ENCODE measurements at regions of chr18 and their contacts with region 1.

Region 1: DNA sequence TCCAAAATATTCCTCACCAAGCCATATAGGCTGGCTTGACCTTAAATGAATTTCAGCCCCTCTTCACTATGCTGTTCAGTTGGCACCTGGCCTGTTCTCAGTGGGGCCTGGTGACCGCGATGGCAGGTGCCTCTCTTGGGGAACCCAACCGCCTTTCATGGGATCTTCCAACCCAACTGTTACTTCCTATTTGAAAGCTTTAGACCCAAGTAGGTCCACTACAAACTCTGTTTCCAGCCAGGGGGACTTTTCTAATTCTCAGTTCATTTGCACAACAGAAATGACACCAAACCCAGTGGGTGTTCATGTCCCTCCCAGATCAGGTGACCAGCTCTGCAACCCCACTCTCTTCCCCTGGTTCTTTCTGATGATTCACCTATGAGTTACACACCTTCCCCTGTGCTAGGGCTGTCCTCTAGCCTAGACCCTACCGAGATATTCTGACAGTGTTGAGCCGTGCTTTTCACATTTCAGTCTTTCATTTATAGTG is 35.6 kb upstream of the NDUFV2 start:
- DNase-seq: peak; percentile 45
- ATAC-seq: peak; percentile 29
- H3K4me3 ChIP-seq: no peak overlapping the region
- H3K4me3 Mint-ChIP-seq: peak overlapping the region; percentile 56
- H3K27ac ChIP-seq: no peak overlapping the region
- H3K27ac Mint-ChIP-seq: peak overlapping the region; percentile 66
- H3K4me1 ChIP-seq: peaks cover 44 to 60% of the 10 kb centered on the region in 2 donors
- H3K4me1 Mint-ChIP-seq: peaks cover 55% of the 10 kb centered on the region
- H3K27me3 ChIP-seq: no peaks in the 10 kb centered on the region
- H3K27me3 Mint-ChIP-seq: no peaks in the 10 kb centered on the region
- CTCF ChIP-seq: no peak

Region 2: GRCh38 chr18:8922669-8923068 is 144.2 kb before region 1 on chr18:
- CTCF ChIA-PET with region 1: no interaction called
- POLR2A ChIA-PET with region 1: no interaction called
- intact Hi-C with region 1: no loop called
- DNase-seq: no peak
- ATAC-seq: no peak
- H3K4me3 ChIP-seq: no peak overlapping the region
- H3K4me3 Mint-ChIP-seq: no peak overlapping the region
- H3K27ac ChIP-seq: no peak overlapping the region
- H3K27ac Mint-ChIP-seq: no peak overlapping the region
- H3K4me1 ChIP-seq: peaks cover 0 to 5% of the 10 kb centered on the region in 2 donors
- H3K4me1 Mint-ChIP-seq: peaks cover 9% of the 10 kb centered on the region
- H3K27me3 ChIP-seq: no peaks in the 10 kb centered on the region
- H3K27me3 Mint-ChIP-seq: no peaks in the 10 kb centered on the region
- CTCF ChIP-seq: no peak

Region 3: GRCh38 chr18:9082711-9083510 is 16.0 kb after region 1 on chr18:
- CTCF ChIA-PET with region 1: interaction called, 36 read pairs
- POLR2A ChIA-PET with region 1: interaction called, 3 read pairs
- intact Hi-C with region 1: loop called (anchors 2 kb)
- DNase-seq: peak; percentile 40
- ATAC-seq: peak; percentile 70
- H3K4me3 ChIP-seq: no peak overlapping the region
- H3K4me3 Mint-ChIP-seq: peak overlapping the region; percentile 59
- H3K27ac ChIP-seq: peak overlapping the region; percentile 7 to 39
- H3K27ac Mint-ChIP-seq: peak overlapping the region; percentile 79
- H3K4me1 ChIP-seq: peaks cover 15 to 17% of the 10 kb centered on the region in 2 donors
- H3K4me1 Mint-ChIP-seq: peaks cover 19% of the 10 kb centered on the region
- H3K27me3 ChIP-seq: no peaks in the 10 kb centered on the region
- H3K27me3 Mint-ChIP-seq: no peaks in the 10 kb centered on the region
- CTCF ChIP-seq: no peak

Region 4: GRCh38 chr18:9117980-9118841 is 51.3 kb after region 1 on chr18:
- CTCF ChIA-PET with region 1: interaction called, 20 read pairs
- POLR2A ChIA-PET with region 1: no interaction called
- intact Hi-C with region 1: no loop called
- DNase-seq: peak; percentile 59
- ATAC-seq: peak; percentile 26
- H3K4me3 ChIP-seq: peak overlapping the region in 2 of 5 experiments; percentile 3 to 66
- H3K4me3 Mint-ChIP-seq: peak overlapping the region; percentile 88
- H3K27ac ChIP-seq: peak overlapping the region; percentile 82 to 99
- H3K27ac Mint-ChIP-seq: peak overlapping the region; percentile 98
- H3K4me1 ChIP-seq: peaks cover 56 to 86% of the 10 kb centered on the region in 2 donors
- H3K4me1 Mint-ChIP-seq: peaks cover 70% of the 10 kb centered on the region
- H3K27me3 ChIP-seq: no peaks in the 10 kb centered on the region
- H3K27me3 Mint-ChIP-seq: no peaks in the 10 kb centered on the region
- CTCF ChIP-seq: no peak

Region 5: GRCh38 chr18:9147440-9148202 is 80.8 kb after region 1 on chr18:
- CTCF ChIA-PET with region 1: interaction called, 84 read pairs
- POLR2A ChIA-PET with region 1: no interaction called
- intact Hi-C with region 1: no loop called
- DNase-seq: peak; percentile 72
- ATAC-seq: peak; percentile 60
- H3K4me3 ChIP-seq: no peak overlapping the region
- H3K4me3 Mint-ChIP-seq: peak overlapping the region; percentile 58
- H3K27ac ChIP-seq: peak overlapping the region; percentile 35 to 48
- H3K27ac Mint-ChIP-seq: peak overlapping the region; percentile 74
- H3K4me1 ChIP-seq: peaks cover 63 to 68% of the 10 kb centered on the region in 2 donors
- H3K4me1 Mint-ChIP-seq: peaks cover 72% of the 10 kb centered on the region
- H3K27me3 ChIP-seq: no peaks in the 10 kb centered on the region
- H3K27me3 Mint-ChIP-seq: no peaks in the 10 kb centered on the region
- CTCF ChIP-seq: peak; percentile 76

Region 6: GRCh38 chr18:9184998-9185613 is 118.2 kb after region 1 on chr18:
- CTCF ChIA-PET with region 1: interaction called, 11 read pairs
- POLR2A ChIA-PET with region 1: no interaction called
- intact Hi-C with region 1: no loop called
- DNase-seq: peak; percentile 25
- ATAC-seq: no peak
- H3K4me3 ChIP-seq: peak overlapping the region in 2 of 5 experiments; percentile 18 to 49
- H3K4me3 Mint-ChIP-seq: peak overlapping the region; percentile 72
- H3K27ac ChIP-seq: peak overlapping the region; percentile 19 to 44
- H3K27ac Mint-ChIP-seq: peak overlapping the region; percentile 51
- H3K4me1 ChIP-seq: peaks cover 13 to 31% of the 10 kb centered on the region in 2 donors
- H3K4me1 Mint-ChIP-seq: peaks cover 46% of the 10 kb centered on the region
- H3K27me3 ChIP-seq: no peaks in the 10 kb centered on the region
- H3K27me3 Mint-ChIP-seq: no peaks in the 10 kb centered on the region
- CTCF ChIP-seq: no peak

Region 7: GRCh38 chr18:9260388-9261380 is 193.8 kb after region 1 on chr18:
- CTCF ChIA-PET with region 1: no interaction called
- POLR2A ChIA-PET with region 1: no interaction called
- intact Hi-C with region 1: no loop called
- DNase-seq: no peak
- ATAC-seq: no peak
- H3K4me3 ChIP-seq: no peak overlapping the region
- H3K4me3 Mint-ChIP-seq: no peak overlapping the region
- H3K27ac ChIP-seq: no peak overlapping the region
- H3K27ac Mint-ChIP-seq: peak overlapping the region; percentile 17
- H3K4me1 ChIP-seq: no peaks in the 10 kb centered on the region
- H3K4me1 Mint-ChIP-seq: no peaks in the 10 kb centered on the region
- H3K27me3 ChIP-seq: no peaks in the 10 kb centered on the region
- H3K27me3 Mint-ChIP-seq: no peaks in the 10 kb centered on the region
- CTCF ChIP-seq: no peak

Region 8: DNA sequence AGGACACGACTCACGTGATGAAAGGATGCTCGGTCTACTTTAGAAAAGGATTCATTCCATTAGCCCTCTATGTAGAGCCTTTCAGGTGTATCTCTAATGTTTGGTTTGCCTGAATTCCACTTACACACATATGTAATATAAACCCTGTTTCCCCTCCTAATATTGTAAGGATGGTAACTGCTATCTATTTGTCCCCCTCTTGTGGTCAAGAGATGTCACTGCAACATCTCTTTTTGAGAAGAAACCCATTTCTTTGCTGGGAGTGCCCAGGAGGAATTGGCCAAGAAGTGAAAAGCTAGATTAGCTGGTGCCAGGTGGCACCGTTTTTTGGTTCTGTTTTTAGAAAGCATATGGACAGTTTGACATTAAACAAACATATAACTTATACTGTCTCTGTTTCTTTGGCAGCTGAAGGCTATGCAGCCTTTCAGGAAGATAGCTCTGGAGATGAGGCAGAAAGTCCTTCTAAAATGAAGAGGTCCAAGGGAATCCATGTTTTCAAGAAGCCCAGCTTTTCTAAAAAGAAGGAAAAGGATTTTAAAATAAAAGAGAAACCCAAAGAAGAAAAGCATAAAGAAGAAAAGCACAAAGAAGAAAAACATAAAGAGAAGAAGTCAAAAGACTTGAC is 449.7 kb after region 1 on chr18:
- CTCF ChIA-PET with region 1: interaction called, 12 read pairs
- POLR2A ChIA-PET with region 1: no interaction called
- intact Hi-C with region 1: no loop called
- DNase-seq: peak; percentile 61
- ATAC-seq: peak; percentile 58
- H3K4me3 ChIP-seq: no peak overlapping the region
- H3K4me3 Mint-ChIP-seq: no peak overlapping the region
- H3K27ac ChIP-seq: no peak overlapping the region
- H3K27ac Mint-ChIP-seq: no peak overlapping the region
- H3K4me1 ChIP-seq: no peaks in the 10 kb centered on the region
- H3K4me1 Mint-ChIP-seq: no peaks in the 10 kb centered on the region
- H3K27me3 ChIP-seq: no peaks in the 10 kb centered on the region
- H3K27me3 Mint-ChIP-seq: no peaks in the 10 kb centered on the region
- CTCF ChIP-seq: peak; percentile 98